ENCODE measurements at regions of chr12 and their contacts with region 1.

Region 1: GRCh38 chr12:117874842-117875434 is 93.9 kb downstream of the KSR2 start:
- DNase-seq: peak; percentile 49 to 95
- H3K4me3 ChIP-seq: no peak overlapping the region
- H3K27ac ChIP-seq: no peak overlapping the region
- H3K4me1 ChIP-seq: peaks cover 2 to 9% (median 4%) of the 10 kb centered on the region in 4 experiments; a peak in 6 of 7 replicates
- H3K27me3 ChIP-seq: peaks cover 0 to 3% (median 0%) of the 10 kb centered on the region in 4 experiments; a peak in 2 of 7 replicates
- CTCF ChIP-seq: peak; percentile 77 to 82 (median 81)
- EP300 ChIP-seq: peak in 1 of 2 experiments; percentile 25; a peak in 1 of 3 replicates
- POLR2A ChIP-seq: no peak
- RAD21 ChIP-seq: peak; percentile 91 to 94

Region 2: GRCh38 chr12:117671734-117672133 is 203.2 kb before region 1 on chr12:
- CTCF ChIA-PET with region 1: no interaction called
- POLR2A ChIA-PET with region 1: no interaction called
- DNase-seq: peak; percentile 75 to 87
- H3K4me3 ChIP-seq: no peak overlapping the region
- H3K27ac ChIP-seq: no peak overlapping the region
- H3K4me1 ChIP-seq: peaks cover 0 to 4% (median 2%) of the 10 kb centered on the region in 4 experiments; a peak in 3 of 7 replicates
- H3K27me3 ChIP-seq: no peaks in the 10 kb centered on the region
- CTCF ChIP-seq: peak; percentile 84 to 93 (median 86)
- EP300 ChIP-seq: no peak
- POLR2A ChIP-seq: no peak
- RAD21 ChIP-seq: peak; percentile 88 to 95

Region 3: DNA sequence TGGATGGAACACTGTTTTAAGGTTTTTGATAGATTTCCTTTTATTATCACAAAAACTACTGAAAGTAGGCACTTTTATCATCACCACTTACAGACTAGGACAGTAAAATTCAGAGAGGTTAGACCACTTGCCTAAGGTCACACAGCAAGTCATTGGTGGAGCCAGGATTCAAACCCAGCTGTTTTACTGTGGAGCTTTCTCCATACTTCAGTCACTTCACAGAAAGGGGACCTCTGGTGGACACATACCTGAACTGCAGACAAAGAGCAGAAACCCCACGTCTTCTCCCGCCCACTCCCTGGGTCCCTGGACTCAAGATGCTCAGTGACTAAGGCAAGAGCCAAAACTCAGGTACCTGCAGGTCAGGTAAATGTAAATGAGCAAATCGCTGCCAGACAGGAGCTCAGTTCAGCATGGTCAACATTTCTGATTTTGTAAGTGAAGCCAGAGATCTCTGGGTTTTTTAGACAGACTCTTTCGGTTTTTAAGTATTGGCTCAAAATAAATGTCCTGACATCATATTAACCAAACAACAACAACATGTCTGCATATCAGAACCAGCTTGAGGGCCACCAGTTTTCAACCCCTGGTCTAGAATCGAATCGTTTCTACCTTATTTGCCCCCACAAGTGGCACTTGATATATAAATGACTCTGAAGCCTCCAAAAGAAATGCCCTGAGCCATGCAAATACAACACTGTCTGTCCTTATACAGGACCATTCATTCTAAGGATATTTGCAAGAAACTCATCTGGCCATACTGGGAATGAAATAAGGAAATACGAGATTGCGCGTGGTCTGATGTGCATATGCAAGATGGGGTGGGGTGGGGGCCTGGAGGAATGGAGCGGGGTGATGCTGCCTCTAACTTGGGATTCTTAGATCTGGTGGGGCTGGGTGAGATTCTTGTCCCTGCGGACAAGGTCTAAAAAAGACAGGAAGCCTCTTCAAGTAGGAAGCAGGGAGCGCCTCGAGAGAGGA is 17.0 kb before region 1 on chr12:
- CTCF ChIA-PET with region 1: interaction called, 19 read pairs
- POLR2A ChIA-PET with region 1: interaction called, 3 read pairs
- DNase-seq: peak; percentile 49 to 87
- H3K4me3 ChIP-seq: no peak overlapping the region
- H3K27ac ChIP-seq: no peak overlapping the region
- H3K4me1 ChIP-seq: no peaks in the 10 kb centered on the region
- H3K27me3 ChIP-seq: no peaks in the 10 kb centered on the region
- CTCF ChIP-seq: peak; percentile 51 to 86 (median 52)
- EP300 ChIP-seq: no peak
- POLR2A ChIP-seq: no peak
- RAD21 ChIP-seq: peak in 1 of 2 experiments; percentile 41; a peak in 2 of 4 replicates

Region 4: GRCh38 chr12:117890137-117890536 is 15.2 kb after region 1 on chr12:
- CTCF ChIA-PET with region 1: interaction called, 10 read pairs
- POLR2A ChIA-PET with region 1: no interaction called
- DNase-seq: no peak
- H3K4me3 ChIP-seq: no peak overlapping the region
- H3K27ac ChIP-seq: no peak overlapping the region
- H3K4me1 ChIP-seq: no peaks in the 10 kb centered on the region
- H3K27me3 ChIP-seq: no peaks in the 10 kb centered on the region
- CTCF ChIP-seq: peak in 2 of 3 experiments; percentile 9 to 47; a peak in 1 of 4 replicates
- EP300 ChIP-seq: no peak
- POLR2A ChIP-seq: no peak
- RAD21 ChIP-seq: peak; percentile 21 to 45; a peak in 2 of 4 replicates

Region 5: DNA sequence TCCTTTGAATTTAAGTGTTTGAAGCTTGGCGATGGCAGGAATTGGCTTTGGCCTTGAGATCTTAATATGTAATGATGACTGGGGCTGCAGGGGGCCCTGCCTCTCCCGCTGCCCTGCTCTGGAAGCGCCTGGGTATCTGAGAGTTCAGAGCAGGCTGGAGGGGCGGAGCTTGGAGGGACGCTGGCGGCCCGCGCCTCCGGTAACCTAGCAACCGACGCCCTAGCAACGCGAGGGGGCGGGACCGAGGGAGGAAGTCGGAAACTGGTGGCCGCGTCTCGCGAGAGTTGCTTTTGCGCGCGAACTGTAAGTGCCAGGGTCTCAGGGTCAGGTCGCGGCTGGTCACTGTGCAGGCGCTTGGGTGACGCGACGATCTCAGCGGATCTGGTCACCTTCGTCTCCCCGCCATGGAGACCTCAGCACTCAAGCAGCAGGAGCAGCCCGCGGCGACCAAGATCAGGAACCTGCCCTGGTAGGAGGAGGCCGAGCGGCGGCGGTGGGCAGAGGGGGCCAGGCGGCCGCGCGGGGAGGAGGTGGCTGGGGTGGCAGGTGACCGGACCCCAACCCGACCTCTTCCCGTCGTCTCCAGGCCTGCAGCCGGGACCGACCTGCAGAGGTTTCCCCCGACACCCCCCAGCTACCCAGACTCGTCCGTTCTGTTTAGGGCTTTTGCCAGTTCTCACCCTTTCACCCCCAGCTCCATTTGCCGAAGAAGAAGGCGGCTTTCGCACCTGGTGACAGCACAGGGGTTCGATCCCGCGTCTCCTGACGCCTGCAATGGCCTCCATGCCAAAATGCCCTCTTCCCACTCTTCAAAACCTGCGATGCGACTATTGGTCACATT is 141.7 kb after region 1 on chr12 and contains the start of gene RFC5:
- CTCF ChIA-PET with region 1: interaction called, 16 read pairs
- POLR2A ChIA-PET with region 1: interaction called, 8 read pairs
- DNase-seq: peak; percentile 94 to 99
- H3K4me3 ChIP-seq: peak within 1 kb of the TSS; percentile 70 to 97 (median 90)
- H3K27ac ChIP-seq: peak within 1 kb of the TSS; percentile 78; the same call in 1 of the 2 replicates
- H3K4me1 ChIP-seq: no peaks in the 10 kb centered on the region; a peak in 1 of 7 replicates
- H3K27me3 ChIP-seq: no peaks in the 10 kb centered on the region
- CTCF ChIP-seq: no peak
- EP300 ChIP-seq: no peak
- POLR2A ChIP-seq: peak; percentile 47 to 91
- RAD21 ChIP-seq: peak in 1 of 2 experiments; percentile 29; a peak in 1 of 4 replicates
- total RNA-seq, gene RFC5: 34.4 and 35.5 TPM in 2 replicates

Region 6: DNA sequence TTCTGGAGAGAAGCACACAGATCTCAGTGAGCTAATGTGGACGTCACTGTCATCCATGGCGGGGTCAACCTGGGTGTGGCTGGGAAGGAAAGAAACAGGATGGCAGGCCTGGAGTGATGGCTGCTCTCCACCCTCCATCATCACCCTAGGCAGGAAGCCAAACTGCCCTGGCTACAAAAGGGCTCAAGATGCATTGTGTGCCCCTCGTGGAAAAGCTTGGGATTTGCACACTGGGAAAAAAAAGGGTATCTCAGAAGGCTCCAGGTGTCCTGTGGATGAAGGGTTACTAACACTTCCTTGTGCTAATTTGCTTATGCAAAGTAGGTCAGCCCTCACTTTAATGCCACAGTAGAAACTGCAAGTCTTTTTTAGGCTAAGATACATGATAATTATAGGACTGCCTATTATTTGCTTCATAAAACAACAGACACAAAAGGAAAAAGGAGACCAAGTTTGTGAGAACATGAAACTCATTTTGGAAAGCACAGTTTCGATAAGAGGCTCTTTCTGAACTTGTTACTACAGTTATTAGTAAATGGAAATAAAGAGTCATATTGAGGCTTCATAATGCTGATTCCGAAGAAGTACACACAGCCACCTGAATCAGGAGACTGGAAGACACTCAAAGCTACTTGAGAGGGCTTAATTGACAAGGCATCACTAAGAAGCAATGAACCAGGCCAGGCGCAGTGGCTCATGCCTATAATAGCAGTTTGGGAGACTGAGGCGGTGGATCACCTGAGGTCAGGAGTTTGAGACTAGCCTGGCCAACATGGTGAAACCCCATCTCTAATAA is 160.5 kb after region 1 on chr12:
- CTCF ChIA-PET with region 1: interaction called, 39 read pairs
- POLR2A ChIA-PET with region 1: interaction called, 17 read pairs
- DNase-seq: no peak
- H3K4me3 ChIP-seq: no peak overlapping the region
- H3K27ac ChIP-seq: no peak overlapping the region
- H3K4me1 ChIP-seq: no peaks in the 10 kb centered on the region; a peak in 1 of 7 replicates
- H3K27me3 ChIP-seq: no peaks in the 10 kb centered on the region
- CTCF ChIP-seq: peak in 1 of 3 experiments; percentile 12; a peak in 1 of 4 replicates
- EP300 ChIP-seq: no peak
- POLR2A ChIP-seq: no peak
- RAD21 ChIP-seq: no peak

Region 7: DNA sequence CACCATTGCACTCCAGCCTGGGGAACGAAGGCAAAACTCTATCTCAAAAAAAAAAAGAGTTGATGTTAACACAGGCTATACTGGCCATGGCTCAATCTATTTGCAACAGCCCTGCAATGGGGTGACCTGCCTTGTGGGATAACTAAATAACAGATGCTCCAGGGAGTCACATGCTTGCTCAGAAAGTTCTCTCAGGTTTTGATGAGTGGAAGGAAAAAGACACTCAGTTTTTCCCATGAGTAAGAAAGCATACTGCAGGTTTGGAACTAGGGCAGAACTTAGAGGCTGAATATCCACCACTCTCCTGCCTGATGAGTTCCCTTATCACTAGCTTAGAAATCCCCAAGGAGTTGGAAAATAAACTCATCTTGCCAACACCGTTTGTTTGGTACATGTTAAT is 169.1 kb after region 1 on chr12:
- CTCF ChIA-PET with region 1: interaction called, 14 read pairs
- POLR2A ChIA-PET with region 1: no interaction called
- DNase-seq: no peak
- H3K4me3 ChIP-seq: no peak overlapping the region
- H3K27ac ChIP-seq: no peak overlapping the region
- H3K4me1 ChIP-seq: no peaks in the 10 kb centered on the region
- H3K27me3 ChIP-seq: no peaks in the 10 kb centered on the region; a peak in 1 of 7 replicates
- CTCF ChIP-seq: no peak
- EP300 ChIP-seq: no peak
- POLR2A ChIP-seq: no peak
- RAD21 ChIP-seq: no peak

Region 8: DNA sequence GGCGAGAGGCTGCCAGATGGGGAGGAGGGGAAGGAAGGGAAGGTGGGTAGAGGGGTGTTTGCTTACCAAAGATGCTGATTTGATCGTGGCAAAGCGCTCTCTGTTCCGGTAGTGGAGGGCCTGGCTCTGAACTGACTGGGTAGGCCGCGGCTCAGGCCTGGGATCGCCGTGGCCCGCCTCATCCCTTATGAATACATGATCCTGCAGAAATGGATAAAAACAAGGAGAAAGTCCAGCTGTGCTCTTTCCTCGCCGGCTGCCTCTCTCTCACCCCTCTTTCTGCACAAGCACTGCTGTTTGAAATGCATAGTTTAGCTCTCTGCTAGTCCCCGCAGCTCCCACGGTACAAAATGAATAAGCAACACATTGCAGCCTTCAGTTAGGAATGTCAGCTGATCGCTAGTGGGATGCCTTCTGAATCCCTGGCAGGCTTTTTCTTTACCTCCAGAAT is 314.8 kb after region 1 on chr12:
- CTCF ChIA-PET with region 1: no interaction called
- POLR2A ChIA-PET with region 1: no interaction called
- DNase-seq: peak in 1 of 2 experiments; percentile 65
- H3K4me3 ChIP-seq: peak overlapping the region in 2 of 4 experiments; percentile 8 to 47; a peak in 3 of 8 replicates
- H3K27ac ChIP-seq: no peak overlapping the region
- H3K4me1 ChIP-seq: peaks cover 0 to 4% (median 3%) of the 10 kb centered on the region in 4 experiments; a peak in 5 of 7 replicates
- H3K27me3 ChIP-seq: no peaks in the 10 kb centered on the region
- CTCF ChIP-seq: no peak
- EP300 ChIP-seq: no peak
- POLR2A ChIP-seq: no peak
- RAD21 ChIP-seq: no peak

Measured in H1 (cell line).